Mammary epithelial cell (primary cell): ENCODE measurements at regions of chr12 and their contacts with region 1.

Region 1: DNA sequence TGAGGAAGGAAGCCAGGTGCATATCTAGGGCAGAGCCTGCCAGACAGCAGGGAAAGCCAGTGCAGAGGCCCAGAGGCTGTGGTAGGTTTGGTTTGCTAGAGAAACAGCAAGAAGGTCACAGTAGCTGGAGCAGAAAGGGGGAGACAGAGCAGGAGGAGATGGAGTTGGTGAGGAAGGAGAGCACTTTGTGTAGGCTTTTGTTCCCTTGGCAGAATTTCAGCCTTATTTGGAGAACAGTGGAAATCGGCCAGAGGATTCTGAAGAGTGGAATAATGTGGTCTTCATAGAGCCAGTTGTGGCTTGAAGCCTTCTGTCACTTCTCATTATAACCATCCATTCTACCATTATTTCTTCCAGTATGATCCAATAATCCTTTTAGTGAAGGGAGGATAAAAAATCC is 212.9 kb upstream of the FAR2 start:
- DNase-seq: no peak
- H3K4me3 ChIP-seq: no peak overlapping the region
- H3K27ac ChIP-seq: no peak overlapping the region
- H3K4me1 ChIP-seq: peaks cover 39% of the 10 kb centered on the region
- H3K27me3 ChIP-seq: no peaks in the 10 kb centered on the region
- CTCF ChIP-seq: no peak

Region 2: GRCh38 chr12:28899951-28900350 is 36.3 kb before region 1 on chr12:
- CTCF ChIA-PET with region 1: no interaction called
- dilution Hi-C with region 1: no loop called
- in situ Hi-C with region 1: no loop called
- intact Hi-C with region 1: loop called (anchors 1 kb)
- DNase-seq: peak; percentile 95
- H3K4me3 ChIP-seq: no peak overlapping the region
- H3K27ac ChIP-seq: peak overlapping the region; percentile 85
- H3K4me1 ChIP-seq: peaks cover 16% of the 10 kb centered on the region
- H3K27me3 ChIP-seq: no peaks in the 10 kb centered on the region
- CTCF ChIP-seq: no peak